Aorta (tissue), 5 donors: ENCODE measurements at regions of chr16 and their contacts with region 1.

Region 1: GRCh38 chr16:70380861-70381603 is 34.3 kb downstream of the DDX19A start:
- DNase-seq: peak; percentile 98
- ATAC-seq: peak; percentile 96
- H3K4me3 ChIP-seq: peak overlapping the region; percentile 43 to 76
- H3K27ac ChIP-seq: peak overlapping the region in 1 of 2 donors; percentile 38
- H3K4me1 ChIP-seq: no peaks in the 10 kb centered on the region
- H3K27me3 ChIP-seq: no peaks in the 10 kb centered on the region

Region 2: GRCh38 chr16:70438969-70439862 is 58.2 kb after region 1 on chr16 and contains the start of gene ST3GAL2:
- intact Hi-C with region 1: loop called (anchors 5 kb)
- DNase-seq: peak; percentile 97 to 98
- ATAC-seq: peak; percentile 98
- H3K4me3 ChIP-seq: peak within 1 kb of the TSS; percentile 66 to 77
- H3K27ac ChIP-seq: peak within 1 kb of the TSS in 1 of 2 donors; percentile 13
- H3K4me1 ChIP-seq: no peaks in the 10 kb centered on the region
- H3K27me3 ChIP-seq: no peaks in the 10 kb centered on the region
- total RNA-seq, gene ST3GAL2: 28.3 to 39.5 TPM

Region 3: DNA sequence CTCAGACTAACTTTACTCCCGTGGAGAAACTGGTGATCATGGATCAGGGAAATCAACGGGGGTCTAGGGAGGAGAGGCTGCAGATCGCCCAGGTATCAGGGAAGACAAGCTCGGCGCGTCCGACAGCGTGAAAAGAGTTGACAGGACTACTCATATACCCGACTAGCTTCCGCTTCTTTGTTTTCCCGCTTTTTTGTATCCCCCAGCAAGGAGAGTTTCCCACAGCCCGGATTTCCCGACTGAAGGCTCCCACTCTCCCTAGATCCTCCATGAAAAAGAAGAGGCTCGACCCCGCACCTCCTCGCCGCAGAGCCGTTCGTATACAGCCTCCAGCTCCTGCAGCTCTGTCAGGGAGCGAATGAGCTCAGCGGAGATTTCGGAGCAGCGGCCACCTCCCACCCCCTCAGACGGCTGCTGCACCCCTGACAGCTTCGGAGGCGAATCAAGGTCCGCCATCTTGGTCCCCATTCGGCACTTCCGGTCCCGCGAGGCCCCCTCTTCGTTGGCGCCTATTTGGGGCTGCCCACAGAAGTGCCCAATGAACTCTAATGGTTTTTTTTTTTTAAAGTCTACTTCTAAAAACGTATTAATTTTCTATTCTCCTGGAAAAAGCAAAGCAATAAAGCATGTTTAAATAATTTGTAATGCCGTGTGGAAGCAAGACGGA is 142.2 kb after region 1 on chr16 and contains the start of gene COG4:
- intact Hi-C with region 1: loop called in 1 of 2 experiments (anchors 5 kb)
- DNase-seq: peak; percentile 93 to 95
- ATAC-seq: peak; percentile 96
- H3K4me3 ChIP-seq: peak within 1 kb of the TSS; percentile 85 to 94
- H3K27ac ChIP-seq: peak within 1 kb of the TSS; percentile 75 to 77
- H3K4me1 ChIP-seq: peaks cover 0 to 5% of the 10 kb centered on the region in 2 donors
- H3K27me3 ChIP-seq: no peaks in the 10 kb centered on the region
- total RNA-seq, gene COG4: 35.7 to 44.6 TPM

Region 4: GRCh38 chr16:70576431-70577255 is 195.6 kb after region 1 on chr16:
- intact Hi-C with region 1: no loop called
- DNase-seq: no peak
- ATAC-seq: no peak
- H3K4me3 ChIP-seq: no peak overlapping the region
- H3K27ac ChIP-seq: peak overlapping the region; percentile 69 to 94
- H3K4me1 ChIP-seq: peaks cover 7% of the 10 kb centered on the region in 2 donors
- H3K27me3 ChIP-seq: no peaks in the 10 kb centered on the region